MCF 10A (cell line): ENCODE measurements at regions of chr1 and their contacts with region 1.

Region 1: DNA sequence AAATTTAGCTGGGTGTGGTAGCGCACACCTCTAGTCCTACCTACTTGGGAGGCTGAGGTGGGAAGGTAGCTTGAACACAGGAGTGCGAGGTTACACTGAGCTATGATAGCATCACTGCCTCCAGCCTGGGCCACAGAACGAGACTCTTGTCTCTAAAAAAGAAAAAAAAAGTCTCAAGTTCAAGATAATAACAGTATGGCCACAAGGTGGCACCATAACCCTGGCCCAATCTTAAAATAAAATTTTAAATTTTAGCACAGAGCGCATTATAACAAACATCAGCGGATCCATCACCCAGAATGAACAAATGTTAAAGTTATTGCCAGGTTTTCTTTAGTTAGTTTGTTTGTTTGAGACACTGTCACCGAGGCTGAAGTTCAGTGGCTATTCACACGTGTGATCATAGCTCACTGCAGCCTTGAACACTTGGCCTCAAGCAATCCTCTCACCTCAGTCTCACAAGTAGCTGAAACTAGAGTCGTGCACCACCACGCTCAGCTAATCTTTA is 2.9 kb upstream of the HTR6 start:
- DNase-seq: peak; percentile 44
- H3K4me3 Mint-ChIP-seq: no peak overlapping the region
- H3K27ac Mint-ChIP-seq: no peak overlapping the region
- H3K4me1 Mint-ChIP-seq: peaks cover 10% of the 10 kb centered on the region
- H3K27me3 Mint-ChIP-seq: peaks cover 14% of the 10 kb centered on the region
- CTCF ChIP-seq: peak; percentile 70

Region 2: GRCh38 chr1:19596714-19597495 is 64.9 kb before region 1 on chr1:
- CTCF ChIA-PET with region 1: interaction called, 10 read pairs
- POLR2A ChIA-PET with region 1: interaction called, 3 read pairs
- intact Hi-C with region 1: no loop called
- DNase-seq: peak; percentile 98
- H3K4me3 Mint-ChIP-seq: peak overlapping the region; percentile 95
- H3K27ac Mint-ChIP-seq: peak overlapping the region; percentile 98
- H3K4me1 Mint-ChIP-seq: peaks cover 28% of the 10 kb centered on the region
- H3K27me3 Mint-ChIP-seq: no peaks in the 10 kb centered on the region
- CTCF ChIP-seq: no peak

Region 3: GRCh38 chr1:19676438-19676922 is 14.7 kb after region 1 on chr1:
- CTCF ChIA-PET with region 1: interaction called, 33 read pairs
- POLR2A ChIA-PET with region 1: interaction called, 6 read pairs
- intact Hi-C with region 1: no loop called
- DNase-seq: peak; percentile 86
- H3K4me3 Mint-ChIP-seq: no peak overlapping the region
- H3K27ac Mint-ChIP-seq: no peak overlapping the region
- H3K4me1 Mint-ChIP-seq: peaks cover 9% of the 10 kb centered on the region
- H3K27me3 Mint-ChIP-seq: no peaks in the 10 kb centered on the region
- CTCF ChIP-seq: no peak

Region 4: DNA sequence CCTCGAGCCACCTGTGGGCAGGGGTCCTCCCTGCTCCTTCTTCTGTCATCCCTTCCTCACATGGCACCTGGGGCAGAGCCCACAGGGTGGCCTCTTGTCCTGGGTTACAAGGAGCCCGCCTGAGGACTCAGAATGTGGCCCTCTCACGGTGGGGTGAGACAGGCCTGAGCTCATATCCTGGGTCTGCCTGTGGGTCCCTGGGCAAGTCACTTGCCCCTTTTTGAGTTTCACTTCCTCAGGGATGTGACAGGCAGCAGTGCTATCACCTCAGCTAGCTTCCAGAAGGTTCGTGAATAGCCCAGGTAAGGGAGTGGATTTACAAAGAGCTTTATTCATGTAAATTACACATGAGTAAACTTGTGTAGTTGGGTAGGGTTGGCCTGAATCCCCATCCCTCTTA is 36.4 kb after region 1 on chr1:
- CTCF ChIA-PET with region 1: interaction called, 103 read pairs
- POLR2A ChIA-PET with region 1: no interaction called
- intact Hi-C with region 1: no loop called
- DNase-seq: no peak
- H3K4me3 Mint-ChIP-seq: no peak overlapping the region
- H3K27ac Mint-ChIP-seq: no peak overlapping the region
- H3K4me1 Mint-ChIP-seq: no peaks in the 10 kb centered on the region
- H3K27me3 Mint-ChIP-seq: no peaks in the 10 kb centered on the region
- CTCF ChIP-seq: no peak

Region 5: GRCh38 chr1:19811206-19811851 is 149.6 kb after region 1 on chr1:
- CTCF ChIA-PET with region 1: no interaction called
- POLR2A ChIA-PET with region 1: no interaction called
- intact Hi-C with region 1: loop called (anchors 5 kb)
- DNase-seq: peak; percentile 61
- H3K4me3 Mint-ChIP-seq: no peak overlapping the region
- H3K27ac Mint-ChIP-seq: no peak overlapping the region
- H3K4me1 Mint-ChIP-seq: peaks cover 5% of the 10 kb centered on the region
- H3K27me3 Mint-ChIP-seq: peaks cover 11% of the 10 kb centered on the region
- CTCF ChIP-seq: peak; percentile 52

Region 6: DNA sequence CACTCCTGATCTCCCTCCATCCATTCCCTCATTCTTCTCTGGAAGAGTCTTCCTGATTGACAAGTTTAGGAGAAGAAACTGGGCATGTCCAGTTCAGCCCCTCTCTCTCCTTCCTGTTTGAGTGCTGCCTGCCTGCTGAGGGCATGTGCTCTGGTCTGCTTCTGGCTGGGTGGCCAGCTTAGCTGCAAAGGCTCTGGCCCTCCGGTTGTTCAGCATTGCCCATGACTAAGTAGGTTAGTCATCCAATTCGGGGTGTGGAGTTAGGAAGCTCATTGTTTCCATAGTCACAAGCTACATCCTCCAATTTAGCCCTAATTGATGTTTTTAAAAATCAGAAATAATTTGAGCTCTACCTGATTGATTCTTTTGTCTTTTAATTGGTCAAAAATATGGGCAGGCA is 287.2 kb after region 1 on chr1:
- CTCF ChIA-PET with region 1: no interaction called
- POLR2A ChIA-PET with region 1: no interaction called
- intact Hi-C with region 1: no loop called
- DNase-seq: peak; percentile 57
- H3K4me3 Mint-ChIP-seq: no peak overlapping the region
- H3K27ac Mint-ChIP-seq: no peak overlapping the region
- H3K4me1 Mint-ChIP-seq: peaks cover 7% of the 10 kb centered on the region
- H3K27me3 Mint-ChIP-seq: no peaks in the 10 kb centered on the region
- CTCF ChIP-seq: no peak